HCT116 (cell line): ENCODE measurements at regions of chr18 and their contacts with region 1.

Region 1: GRCh38 chr18:12849545-12849944 is 34.5 kb downstream of the PTPN2 start:
- DNase-seq: no peak
- ATAC-seq: no peak
- H3K4me3 ChIP-seq: no peak overlapping the region
- H3K27ac ChIP-seq: no peak overlapping the region
- H3K4me1 ChIP-seq: no peaks in the 10 kb centered on the region
- H3K27me3 ChIP-seq: no peaks in the 10 kb centered on the region
- CTCF ChIP-seq: no peak
- POLR2A ChIP-seq: no peak
- RAD21 ChIP-seq: no peak

Region 2: GRCh38 chr18:12791610-12792009 is 57.9 kb before region 1 on chr18:
- CTCF ChIA-PET with region 1: no interaction called
- POLR2A ChIA-PET with region 1: no interaction called
- RAD21 ChIA-PET with region 1: no interaction called
- intact Hi-C with region 1: no loop called
- DNase-seq: no peak
- ATAC-seq: no peak
- H3K4me3 ChIP-seq: no peak overlapping the region
- H3K27ac ChIP-seq: no peak overlapping the region
- H3K4me1 ChIP-seq: no peaks in the 10 kb centered on the region
- H3K27me3 ChIP-seq: no peaks in the 10 kb centered on the region
- CTCF ChIP-seq: no peak
- POLR2A ChIP-seq: no peak
- RAD21 ChIP-seq: no peak

Region 3: GRCh38 chr18:12803096-12803936 is 46.2 kb before region 1 on chr18:
- CTCF ChIA-PET with region 1: no interaction called
- POLR2A ChIA-PET with region 1: no interaction called
- RAD21 ChIA-PET with region 1: no interaction called
- intact Hi-C with region 1: loop called (anchors 5 kb)
- DNase-seq: no peak
- ATAC-seq: no peak
- H3K4me3 ChIP-seq: no peak overlapping the region
- H3K27ac ChIP-seq: no peak overlapping the region
- H3K4me1 ChIP-seq: no peaks in the 10 kb centered on the region
- H3K27me3 ChIP-seq: no peaks in the 10 kb centered on the region
- CTCF ChIP-seq: no peak
- POLR2A ChIP-seq: no peak
- RAD21 ChIP-seq: no peak